ENCODE measurements at regions of chr1 and their contacts with region 1.

Region 1: DNA sequence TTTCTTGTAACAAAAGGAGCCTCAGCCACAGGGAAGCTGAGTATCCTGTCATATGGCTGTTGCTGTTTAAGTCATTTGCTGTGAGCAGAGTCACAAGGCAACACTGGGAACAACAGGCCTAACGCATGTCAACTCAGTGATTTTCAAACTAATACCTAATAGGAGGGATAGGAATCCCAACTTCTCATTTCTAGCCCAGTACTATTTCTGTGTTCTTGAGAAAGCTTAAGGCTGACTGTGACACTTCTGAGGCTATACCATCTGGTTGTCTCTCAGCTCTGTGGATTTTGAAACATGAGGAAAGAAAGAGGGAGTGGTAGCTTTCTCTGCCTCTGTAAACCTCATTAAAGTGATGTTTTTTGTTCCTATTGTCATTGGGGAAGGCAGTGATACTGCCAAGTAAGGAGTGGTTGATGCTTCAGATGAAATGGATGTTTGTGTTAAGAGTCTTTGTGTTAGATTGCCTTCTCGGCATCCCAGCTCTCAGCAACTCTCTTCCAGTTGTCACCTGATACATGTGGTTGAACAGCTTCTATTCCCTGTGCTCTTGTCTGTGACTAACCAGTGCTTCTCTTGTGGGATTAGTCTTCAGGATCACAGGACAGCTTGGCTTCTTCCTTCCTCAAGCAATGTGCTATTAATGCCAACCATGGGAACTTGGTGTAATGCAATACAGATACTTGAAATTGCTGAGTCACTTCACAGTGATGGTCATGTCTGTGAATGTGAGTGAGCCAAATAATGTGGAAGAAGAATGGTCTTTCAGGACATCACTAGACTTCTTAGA is 166.8 kb upstream of the IVNS1ABP start:
- DNase-seq: no peak
- ATAC-seq: peak in 7 of 8 donors; percentile 12 to 88 (median 66)
- H3K4me3 ChIP-seq: no peak overlapping the region
- H3K27ac ChIP-seq: peak overlapping the region in 8 of 10 donors; percentile 2 to 83 (median 53)
- H3K4me1 ChIP-seq: peaks cover 3 to 41% (median 17%) of the 10 kb centered on the region in 9 donors
- H3K27me3 ChIP-seq: no peaks in the 10 kb centered on the region
- CTCF ChIP-seq: no peak

Region 2: GRCh38 chr1:185244015-185244747 is 239.7 kb before region 1 on chr1:
- intact Hi-C with region 1: no loop called
- DNase-seq: no peak
- ATAC-seq: no peak
- H3K4me3 ChIP-seq: no peak overlapping the region
- H3K27ac ChIP-seq: no peak overlapping the region
- H3K4me1 ChIP-seq: peaks cover 0 to 13% (median 0%) of the 10 kb centered on the region in 9 donors
- H3K27me3 ChIP-seq: no peaks in the 10 kb centered on the region
- CTCF ChIP-seq: no peak

Region 3: DNA sequence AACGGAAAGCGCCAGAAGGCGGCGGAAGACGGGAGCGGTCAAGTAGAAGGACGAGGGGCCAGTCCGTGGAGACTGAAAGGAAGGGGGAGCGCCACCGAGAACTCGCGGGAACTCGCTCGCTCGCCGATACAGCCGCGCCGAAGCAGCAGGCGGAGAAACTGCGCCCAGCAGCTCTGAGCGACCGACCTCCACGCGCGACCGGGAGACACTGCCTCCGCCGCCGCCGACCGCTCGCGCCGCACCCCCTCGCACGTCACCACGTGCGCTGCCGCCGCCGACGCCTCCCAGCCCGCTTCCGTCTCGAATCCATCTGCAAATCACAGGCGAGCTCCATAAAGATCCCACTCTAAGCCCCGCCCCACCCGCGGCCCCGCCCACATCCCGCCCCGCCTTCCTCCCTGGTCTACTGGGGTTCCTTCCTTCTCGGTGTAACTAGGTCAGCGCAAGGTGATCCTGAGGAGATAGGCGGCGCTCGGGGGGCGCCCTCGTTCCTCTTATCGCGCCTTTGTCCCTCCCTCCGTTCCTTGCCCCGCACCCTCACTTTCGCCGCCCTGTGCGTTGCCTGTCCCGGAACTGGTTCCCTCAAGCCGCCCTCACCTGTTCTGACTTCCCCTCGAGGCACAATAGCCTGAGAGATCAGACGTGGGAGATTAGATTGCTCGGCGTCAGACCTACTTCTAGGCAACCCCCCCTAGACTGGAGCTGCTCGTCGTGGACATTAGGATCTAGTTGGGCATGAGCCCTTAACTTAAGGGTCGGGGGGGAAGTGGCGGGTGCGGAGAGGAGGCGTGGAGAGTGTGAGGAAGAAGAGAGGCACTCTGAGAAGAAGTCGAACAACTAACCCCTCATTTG is 166.6 kb before region 1 on chr1 and contains the start of gene IVNS1ABP:
- intact Hi-C with region 1: loop called in 1 of 10 experiments (anchors 5 kb)
- DNase-seq: peak; percentile 95
- ATAC-seq: peak; percentile 88 to 95 (median 91)
- H3K4me3 ChIP-seq: peak within 1 kb of the TSS; percentile 85 to 99 (median 92)
- H3K27ac ChIP-seq: peak within 1 kb of the TSS; percentile 90 to 99 (median 96)
- H3K4me1 ChIP-seq: peaks cover 3 to 49% (median 44%) of the 10 kb centered on the region in 9 donors
- H3K27me3 ChIP-seq: no peaks in the 10 kb centered on the region
- CTCF ChIP-seq: peak in 5 of 9 donors; percentile 10 to 43 (median 25)
- total RNA-seq, gene IVNS1ABP: 44.7 to 132 (median 66.7) TPM

Region 4: GRCh38 chr1:185426848-185427247 is 57.0 kb before region 1 on chr1:
- intact Hi-C with region 1: no loop called
- DNase-seq: peak; percentile 15 to 57
- ATAC-seq: peak; percentile 74 to 89 (median 86)
- H3K4me3 ChIP-seq: no peak overlapping the region
- H3K27ac ChIP-seq: peak overlapping the region in 8 of 10 donors; percentile 7 to 85 (median 70)
- H3K4me1 ChIP-seq: peaks cover 0 to 19% (median 11%) of the 10 kb centered on the region in 9 donors
- H3K27me3 ChIP-seq: no peaks in the 10 kb centered on the region
- CTCF ChIP-seq: peak in 3 of 9 donors; percentile 13 to 37 (median 26)

Region 5: DNA sequence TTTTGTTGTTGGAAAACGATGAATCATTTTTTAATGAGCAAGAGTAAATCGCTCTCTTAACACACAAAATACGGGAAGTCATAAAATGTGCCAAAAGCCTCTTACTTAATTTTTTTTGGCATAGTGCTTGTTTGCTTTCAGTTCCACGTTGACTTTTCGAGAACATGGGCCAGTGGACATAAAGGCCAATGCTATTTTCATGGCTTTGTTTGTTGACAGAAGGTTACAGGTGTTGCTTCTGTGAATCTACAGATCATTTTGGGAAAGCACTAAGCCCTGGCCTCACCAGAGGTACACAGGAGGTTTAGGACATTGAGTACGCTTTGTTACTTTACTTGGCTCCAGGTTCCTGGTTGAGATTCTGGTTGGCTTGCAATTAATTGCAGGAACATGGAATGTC is 50.9 kb after region 1 on chr1:
- intact Hi-C with region 1: loop called in 1 of 10 experiments (anchors 5 kb)
- DNase-seq: no peak
- ATAC-seq: peak in 6 of 8 donors; percentile 20 to 65 (median 35)
- H3K4me3 ChIP-seq: no peak overlapping the region
- H3K27ac ChIP-seq: peak overlapping the region in 2 of 10 donors; percentile 24 to 70
- H3K4me1 ChIP-seq: peaks cover 0 to 42% (median 16%) of the 10 kb centered on the region in 9 donors
- H3K27me3 ChIP-seq: no peaks in the 10 kb centered on the region
- CTCF ChIP-seq: no peak

Region 6: DNA sequence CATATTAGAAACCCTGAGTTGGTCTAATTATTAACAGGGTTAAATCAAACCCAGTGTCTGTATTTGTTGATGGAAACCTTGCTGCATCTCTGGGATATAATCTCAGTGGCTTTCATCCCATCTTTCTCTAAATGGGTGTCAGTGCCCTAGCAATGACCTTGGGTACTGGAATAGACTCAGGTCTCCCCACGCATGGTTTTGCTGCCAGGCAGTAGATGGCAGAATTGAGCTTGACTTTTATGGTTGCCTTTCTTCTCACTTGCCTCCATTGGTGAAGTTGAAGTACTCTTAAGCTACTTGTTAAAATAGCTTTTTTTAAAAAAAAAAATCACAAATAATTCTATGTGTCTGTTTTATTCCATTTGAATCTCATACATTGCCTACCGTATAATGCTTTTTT is 168.5 kb after region 1 on chr1:
- intact Hi-C with region 1: loop called in 2 of 10 experiments (anchors 10 kb)
- DNase-seq: no peak
- ATAC-seq: no peak
- H3K4me3 ChIP-seq: no peak overlapping the region
- H3K27ac ChIP-seq: peak overlapping the region in 2 of 10 donors; percentile 11 to 83
- H3K4me1 ChIP-seq: peaks cover 0 to 15% (median 2%) of the 10 kb centered on the region in 9 donors
- H3K27me3 ChIP-seq: no peaks in the 10 kb centered on the region
- CTCF ChIP-seq: peak in 3 of 9 donors; percentile 22 to 27 (median 23)